ENCODE measurements at regions of chr1 and their contacts with region 1.

Region 1: GRCh38 chr1:174800216-174800851 is 199.4 kb upstream of the CACYBP start:
- DNase-seq: peak; percentile 33
- H3K4me3 Mint-ChIP-seq: no peak overlapping the region
- H3K27ac Mint-ChIP-seq: no peak overlapping the region
- H3K4me1 Mint-ChIP-seq: peaks cover 5% of the 10 kb centered on the region
- H3K27me3 Mint-ChIP-seq: no peaks in the 10 kb centered on the region

Region 2: GRCh38 chr1:174713796-174714195 is 86.5 kb before region 1 on chr1:
- CTCF ChIA-PET with region 1: no interaction called
- POLR2A ChIA-PET with region 1: no interaction called
- intact Hi-C with region 1: no loop called
- DNase-seq: no peak
- H3K4me3 Mint-ChIP-seq: no peak overlapping the region
- H3K27ac Mint-ChIP-seq: no peak overlapping the region
- H3K4me1 Mint-ChIP-seq: no peaks in the 10 kb centered on the region
- H3K27me3 Mint-ChIP-seq: no peaks in the 10 kb centered on the region

Region 3: GRCh38 chr1:174815036-174815435 is 14.7 kb after region 1 on chr1:
- CTCF ChIA-PET with region 1: interaction called, 5 read pairs
- POLR2A ChIA-PET with region 1: interaction called, 8 read pairs
- intact Hi-C with region 1: loop called (anchors 1 kb)
- DNase-seq: peak; percentile 60
- H3K4me3 Mint-ChIP-seq: no peak overlapping the region
- H3K27ac Mint-ChIP-seq: no peak overlapping the region
- H3K4me1 Mint-ChIP-seq: peaks cover 33% of the 10 kb centered on the region
- H3K27me3 Mint-ChIP-seq: no peaks in the 10 kb centered on the region

Region 4: DNA sequence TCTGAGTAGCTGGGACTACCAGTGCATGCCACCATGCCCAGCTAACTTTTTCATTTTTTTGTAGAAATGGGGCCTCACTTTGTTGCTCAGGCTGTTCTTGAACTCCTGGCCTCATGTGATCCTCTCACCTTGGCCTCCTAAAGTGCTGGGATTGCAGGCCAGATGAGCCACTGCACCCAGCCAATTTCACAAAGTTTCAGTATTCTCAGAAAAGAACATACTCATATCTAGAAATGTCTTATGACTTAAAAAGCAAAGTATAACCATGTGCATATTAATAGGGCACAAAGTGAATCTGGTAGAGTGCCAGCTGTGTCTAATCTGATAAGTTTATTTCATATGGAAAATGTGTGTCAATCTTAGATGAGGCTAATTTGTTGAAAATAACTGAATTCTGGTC is 111.9 kb after region 1 on chr1:
- CTCF ChIA-PET with region 1: interaction called, 5 read pairs
- POLR2A ChIA-PET with region 1: no interaction called
- intact Hi-C with region 1: loop called (anchors 1 kb)
- DNase-seq: peak; percentile 69
- H3K4me3 Mint-ChIP-seq: no peak overlapping the region
- H3K27ac Mint-ChIP-seq: peak overlapping the region; percentile 33
- H3K4me1 Mint-ChIP-seq: peaks cover 59% of the 10 kb centered on the region
- H3K27me3 Mint-ChIP-seq: no peaks in the 10 kb centered on the region